Naive thymus-derived CD8-positive, alpha-beta T cell (primary cell): ENCODE measurements at regions of chr1 and their contacts with region 1.

Region 1: GRCh38 chr1:25520446-25521061 is 22.9 kb upstream of the LDLRAP1 start:
- DNase-seq: peak; percentile 47 to 85 (median 68)
- ATAC-seq: peak; percentile 68 to 82
- H3K4me3 Mint-ChIP-seq: no peak overlapping the region
- H3K27ac Mint-ChIP-seq: peak overlapping the region in 9 of 10 donors; percentile 30 to 92 (median 86)
- H3K4me1 Mint-ChIP-seq: peaks cover 5 to 15% (median 13%) of the 10 kb centered on the region in 4 donors
- H3K27me3 Mint-ChIP-seq: no peaks in the 10 kb centered on the region

Region 2: GRCh38 chr1:25503551-25504426 is 16.8 kb before region 1 on chr1:
- POLR2A ChIA-PET with region 1: interaction called, 90 read pairs
- DNase-seq: peak; percentile 64 to 91 (median 72)
- ATAC-seq: peak; percentile 98
- H3K4me3 Mint-ChIP-seq: no peak overlapping the region
- H3K27ac Mint-ChIP-seq: peak overlapping the region; percentile 44 to 86 (median 64)
- H3K4me1 Mint-ChIP-seq: peaks cover 12 to 36% (median 33%) of the 10 kb centered on the region in 4 donors
- H3K27me3 Mint-ChIP-seq: no peaks in the 10 kb centered on the region